MCF 10A (cell line): ENCODE measurements at regions of chr3 and their contacts with region 1.

Region 1: GRCh38 chr3:154252759-154253638 is 71.3 kb downstream of the DHX36 start:
- DNase-seq: peak; percentile 88
- H3K4me3 Mint-ChIP-seq: no peak overlapping the region
- H3K27ac Mint-ChIP-seq: no peak overlapping the region
- H3K4me1 Mint-ChIP-seq: no peaks in the 10 kb centered on the region
- H3K27me3 Mint-ChIP-seq: no peaks in the 10 kb centered on the region
- CTCF ChIP-seq: peak; percentile 83

Region 2: GRCh38 chr3:154040286-154040685 is 212.7 kb before region 1 on chr3:
- CTCF ChIA-PET with region 1: interaction called, 4 read pairs
- POLR2A ChIA-PET with region 1: no interaction called
- intact Hi-C with region 1: loop called (anchors 1 kb)
- DNase-seq: peak; percentile 49
- H3K4me3 Mint-ChIP-seq: no peak overlapping the region
- H3K27ac Mint-ChIP-seq: no peak overlapping the region
- H3K4me1 Mint-ChIP-seq: no peaks in the 10 kb centered on the region
- H3K27me3 Mint-ChIP-seq: no peaks in the 10 kb centered on the region
- CTCF ChIP-seq: peak; percentile 18

Region 3: DNA sequence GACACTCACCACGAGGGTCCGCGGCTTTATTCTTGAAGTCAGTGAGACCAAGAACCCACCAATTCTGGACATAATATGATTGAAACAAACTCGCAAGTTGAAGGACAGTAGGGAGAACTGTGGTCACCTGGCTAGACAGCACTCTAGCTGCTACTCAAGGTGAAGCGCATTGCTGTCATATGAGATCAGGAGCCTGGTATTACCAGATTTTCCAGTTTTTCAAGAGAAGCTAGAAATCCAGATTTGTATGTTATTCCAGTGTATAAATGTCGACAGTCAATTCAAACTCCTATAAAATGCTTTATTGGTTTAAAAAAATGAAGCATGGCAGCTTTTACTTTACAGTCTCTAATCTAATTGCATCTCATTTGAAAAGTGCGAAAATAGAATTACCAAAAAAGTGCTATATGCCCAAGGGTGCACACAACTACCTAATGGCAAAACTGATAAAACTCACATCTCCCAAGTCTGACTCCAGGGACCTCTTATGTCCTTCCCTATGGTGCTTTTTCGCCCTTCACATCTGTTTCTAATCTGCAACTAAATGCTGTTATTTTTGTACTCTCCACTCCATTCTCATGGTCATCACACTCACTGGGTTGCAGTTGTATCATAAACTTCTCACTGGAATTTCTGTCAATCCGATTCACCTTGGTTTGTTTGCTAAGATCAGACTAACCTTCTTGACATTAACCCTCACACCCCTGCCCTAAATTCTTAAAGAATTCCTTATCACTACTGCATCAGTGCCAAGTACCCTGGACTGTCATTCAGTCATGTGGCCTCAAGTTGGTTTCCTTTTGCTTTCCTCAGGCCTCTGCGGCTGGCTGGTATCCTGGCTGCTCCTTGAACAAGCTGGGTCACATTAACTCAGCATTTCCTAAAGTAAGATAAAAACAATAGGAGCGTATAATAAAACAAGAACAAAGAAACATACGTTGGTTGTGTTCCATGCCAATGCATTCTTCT is 163.3 kb before region 1 on chr3:
- CTCF ChIA-PET with region 1: interaction called, 75 read pairs
- POLR2A ChIA-PET with region 1: no interaction called
- intact Hi-C with region 1: no loop called
- DNase-seq: no peak
- H3K4me3 Mint-ChIP-seq: no peak overlapping the region
- H3K27ac Mint-ChIP-seq: no peak overlapping the region
- H3K4me1 Mint-ChIP-seq: no peaks in the 10 kb centered on the region
- H3K27me3 Mint-ChIP-seq: no peaks in the 10 kb centered on the region
- CTCF ChIP-seq: no peak

Region 4: DNA sequence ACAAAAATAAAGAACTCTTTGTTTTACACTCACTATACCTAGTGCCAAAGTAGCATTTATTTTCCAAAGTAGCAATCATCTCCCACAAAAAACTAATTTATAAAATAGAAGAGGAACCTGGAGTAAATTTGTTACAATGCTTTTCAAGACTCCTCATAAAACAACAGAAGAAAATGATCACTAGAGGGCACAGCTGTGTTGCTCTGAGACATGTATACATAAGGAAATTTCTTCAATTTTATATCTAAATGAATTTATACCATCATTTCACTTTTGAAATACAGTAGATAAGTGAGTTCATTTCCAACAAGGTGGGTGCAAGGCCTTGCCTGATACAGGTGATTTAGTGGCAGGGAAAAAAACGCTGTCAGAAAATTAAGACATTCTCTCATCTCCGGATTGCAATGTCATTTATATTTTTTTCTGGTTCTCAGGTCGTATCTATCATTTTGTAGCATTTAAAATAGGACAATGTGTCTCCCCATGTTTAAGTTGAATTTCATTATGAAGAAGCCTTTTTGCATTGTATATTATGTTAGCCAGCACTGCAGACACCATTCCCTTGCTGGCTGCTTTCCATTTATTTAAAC is 157.1 kb before region 1 on chr3:
- CTCF ChIA-PET with region 1: interaction called, 75 read pairs
- POLR2A ChIA-PET with region 1: no interaction called
- intact Hi-C with region 1: loop called (anchors 1 kb)
- DNase-seq: peak; percentile 33
- H3K4me3 Mint-ChIP-seq: no peak overlapping the region
- H3K27ac Mint-ChIP-seq: no peak overlapping the region
- H3K4me1 Mint-ChIP-seq: no peaks in the 10 kb centered on the region
- H3K27me3 Mint-ChIP-seq: no peaks in the 10 kb centered on the region
- CTCF ChIP-seq: peak; percentile 55

Region 5: GRCh38 chr3:154102225-154102624 is 150.8 kb before region 1 on chr3:
- CTCF ChIA-PET with region 1: interaction called, 58 read pairs
- POLR2A ChIA-PET with region 1: no interaction called
- intact Hi-C with region 1: no loop called
- DNase-seq: no peak
- H3K4me3 Mint-ChIP-seq: no peak overlapping the region
- H3K27ac Mint-ChIP-seq: no peak overlapping the region
- H3K4me1 Mint-ChIP-seq: no peaks in the 10 kb centered on the region
- H3K27me3 Mint-ChIP-seq: no peaks in the 10 kb centered on the region
- CTCF ChIP-seq: no peak

Region 6: GRCh38 chr3:154126651-154127050 is 126.3 kb before region 1 on chr3:
- CTCF ChIA-PET with region 1: interaction called, 12 read pairs
- POLR2A ChIA-PET with region 1: no interaction called
- intact Hi-C with region 1: no loop called
- DNase-seq: no peak
- H3K4me3 Mint-ChIP-seq: no peak overlapping the region
- H3K27ac Mint-ChIP-seq: no peak overlapping the region
- H3K4me1 Mint-ChIP-seq: peaks cover 11% of the 10 kb centered on the region
- H3K27me3 Mint-ChIP-seq: no peaks in the 10 kb centered on the region
- CTCF ChIP-seq: no peak